ENCODE measurements at regions of chr22 and their contacts with region 1.

Region 1: GRCh38 chr22:46649141-46650077 is 29.2 kb downstream of the GRAMD4 start:
- DNase-seq: peak; percentile 81
- H3K4me3 ChIP-seq: no peak overlapping the region
- H3K27ac ChIP-seq: peak overlapping the region; percentile 69 to 71
- H3K4me1 ChIP-seq: peaks cover 11% of the 10 kb centered on the region
- H3K27me3 ChIP-seq: no peaks in the 10 kb centered on the region
- CTCF ChIP-seq: no peak
- POLR2A ChIP-seq: no peak

Region 2: GRCh38 chr22:46528121-46528610 is 121.2 kb before region 1 on chr22:
- intact Hi-C with region 1: no loop called
- DNase-seq: peak; percentile 34
- H3K4me3 ChIP-seq: no peak overlapping the region
- H3K27ac ChIP-seq: no peak overlapping the region
- H3K4me1 ChIP-seq: peaks cover 18% of the 10 kb centered on the region
- H3K27me3 ChIP-seq: no peaks in the 10 kb centered on the region
- CTCF ChIP-seq: no peak
- POLR2A ChIP-seq: no peak

Region 3: GRCh38 chr22:46576556-46577367 is 72.6 kb before region 1 on chr22:
- intact Hi-C with region 1: loop called (anchors 5 kb)
- DNase-seq: no peak
- H3K4me3 ChIP-seq: peak overlapping the region; percentile 48
- H3K27ac ChIP-seq: no peak overlapping the region
- H3K4me1 ChIP-seq: no peaks in the 10 kb centered on the region
- H3K27me3 ChIP-seq: no peaks in the 10 kb centered on the region
- CTCF ChIP-seq: no peak
- POLR2A ChIP-seq: no peak

Region 4: GRCh38 chr22:46731246-46732040 is 82.0 kb after region 1 on chr22:
- intact Hi-C with region 1: loop called (anchors 2 kb)
- DNase-seq: peak; percentile 64
- H3K4me3 ChIP-seq: no peak overlapping the region
- H3K27ac ChIP-seq: peak overlapping the region in 1 of 2 donors; percentile 10
- H3K4me1 ChIP-seq: peaks cover 3% of the 10 kb centered on the region
- H3K27me3 ChIP-seq: no peaks in the 10 kb centered on the region
- CTCF ChIP-seq: no peak
- POLR2A ChIP-seq: no peak

Measured in prostate gland (tissue), 2 donors.